Activated B cell treated with CpG ODN at 0.5 μM for 24 hours (primary cell): ENCODE measurements at regions of chr6 and their contacts with region 1.

Region 1: DNA sequence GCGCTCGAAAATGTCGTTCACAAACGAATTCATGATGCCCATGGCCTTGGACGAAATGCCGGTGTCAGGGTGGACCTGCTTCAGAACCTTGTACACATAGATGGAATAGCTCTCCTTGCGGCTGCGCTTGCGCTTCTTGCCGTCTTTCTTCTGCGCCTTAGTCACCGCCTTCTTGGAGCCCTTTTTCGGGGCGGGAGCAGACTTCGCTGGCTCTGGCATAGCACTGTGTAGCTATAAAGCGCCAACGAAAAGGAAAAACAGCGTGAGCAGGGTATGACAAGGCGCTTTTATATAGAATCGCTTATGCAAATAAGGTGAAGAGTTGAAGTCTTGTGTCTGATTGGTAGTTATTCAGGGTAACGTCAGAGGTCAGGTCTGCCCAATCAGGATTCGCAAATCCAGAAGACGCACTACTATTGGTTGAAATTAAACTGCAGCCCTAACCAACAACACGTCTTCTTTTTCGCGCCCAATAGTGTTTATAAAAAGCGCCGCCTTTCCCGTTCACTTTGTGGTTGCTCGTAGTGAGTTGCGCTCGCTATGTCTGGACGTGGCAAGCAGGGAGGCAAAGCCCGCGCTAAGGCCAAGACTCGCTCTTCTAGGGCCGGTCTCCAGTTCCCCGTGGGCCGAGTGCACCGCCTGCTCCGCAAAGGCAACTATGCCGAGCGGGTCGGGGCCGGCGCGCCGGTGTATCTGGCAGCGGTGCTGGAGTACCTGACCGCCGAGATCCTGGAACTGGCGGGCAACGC is 114.8 kb upstream of the PRSS16 start:
- DNase-seq: peak; percentile 77
- ATAC-seq: peak; percentile 84
- H3K4me3 Mint-ChIP-seq: no peak overlapping the region
- H3K27ac Mint-ChIP-seq: no peak overlapping the region
- H3K4me1 Mint-ChIP-seq: peaks cover 14% of the 10 kb centered on the region
- H3K27me3 Mint-ChIP-seq: no peaks in the 10 kb centered on the region
- CTCF ChIP-seq: no peak

Region 2: GRCh38 chr6:26031595-26032339 is 1100.9 kb before region 1 on chr6:
- CTCF ChIA-PET with region 1: no interaction called
- POLR2A ChIA-PET with region 1: interaction called, 17 read pairs
- intact Hi-C with region 1: no loop called
- DNase-seq: peak; percentile 55
- ATAC-seq: peak; percentile 62
- H3K4me3 Mint-ChIP-seq: peak overlapping the region; percentile 93
- H3K27ac Mint-ChIP-seq: peak overlapping the region; percentile 98
- H3K4me1 Mint-ChIP-seq: peaks cover 40% of the 10 kb centered on the region
- H3K27me3 Mint-ChIP-seq: peaks cover 2% of the 10 kb centered on the region
- CTCF ChIP-seq: no peak

Region 3: GRCh38 chr6:26103770-26104456 is 1028.8 kb before region 1 on chr6:
- CTCF ChIA-PET with region 1: interaction called, 3 read pairs
- POLR2A ChIA-PET with region 1: interaction called, 4 read pairs
- intact Hi-C with region 1: loop called (anchors 2 kb)
- DNase-seq: peak; percentile 83
- ATAC-seq: peak; percentile 85
- H3K4me3 Mint-ChIP-seq: peak overlapping the region; percentile 85
- H3K27ac Mint-ChIP-seq: peak overlapping the region; percentile 98
- H3K4me1 Mint-ChIP-seq: peaks cover 12% of the 10 kb centered on the region
- H3K27me3 Mint-ChIP-seq: peaks cover 3% of the 10 kb centered on the region
- CTCF ChIP-seq: no peak

Region 4: GRCh38 chr6:26234421-26235296 is 898.0 kb before region 1 on chr6:
- CTCF ChIA-PET with region 1: no interaction called
- POLR2A ChIA-PET with region 1: interaction called, 28 read pairs
- intact Hi-C with region 1: no loop called
- DNase-seq: peak; percentile 49
- ATAC-seq: peak; percentile 77
- H3K4me3 Mint-ChIP-seq: peak overlapping the region; percentile 89
- H3K27ac Mint-ChIP-seq: peak overlapping the region; percentile 97
- H3K4me1 Mint-ChIP-seq: peaks cover 26% of the 10 kb centered on the region
- H3K27me3 Mint-ChIP-seq: no peaks in the 10 kb centered on the region
- CTCF ChIP-seq: no peak

Region 5: DNA sequence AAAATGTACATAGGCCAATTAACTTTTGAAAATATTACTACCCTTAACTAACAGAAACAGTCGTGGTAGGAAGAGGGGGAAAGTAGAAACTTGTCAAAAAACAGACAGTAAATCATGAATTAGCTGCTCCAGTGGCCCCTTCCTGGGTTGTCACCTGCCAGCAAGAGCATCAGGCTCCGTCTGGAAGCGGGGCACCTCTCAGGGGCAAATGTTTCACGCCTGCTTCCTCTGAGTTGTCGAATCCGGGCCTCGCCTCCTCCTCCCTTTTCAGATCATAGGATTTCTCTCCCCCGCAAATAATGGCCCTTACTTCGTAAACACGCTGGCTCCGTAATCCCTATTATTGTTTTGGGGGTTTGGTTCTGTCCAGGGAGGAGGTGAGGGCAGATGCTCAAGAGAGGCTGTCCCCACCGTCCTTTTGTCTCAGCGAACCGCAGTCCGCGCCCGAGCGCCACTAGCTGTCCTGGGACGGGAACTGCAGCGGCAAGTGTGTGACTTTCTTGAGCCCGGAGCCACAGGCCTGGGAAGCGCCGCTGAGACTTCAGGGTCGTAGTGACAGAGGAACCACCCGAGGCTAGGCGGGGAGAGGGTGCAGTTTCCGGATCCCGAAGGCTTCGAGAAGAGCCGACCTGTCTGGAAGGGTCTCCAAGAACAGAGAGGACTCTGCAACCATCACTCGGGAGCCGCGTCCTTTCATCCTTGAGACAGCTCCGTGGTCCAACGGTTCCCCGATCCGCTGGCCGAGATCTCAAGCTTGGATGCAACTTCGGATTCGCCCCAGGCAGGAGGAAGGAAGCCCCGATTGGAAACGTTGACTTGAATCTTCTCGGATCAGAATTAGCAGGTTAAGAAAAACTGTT is 554.7 kb after region 1 on chr6:
- CTCF ChIA-PET with region 1: no interaction called
- POLR2A ChIA-PET with region 1: no interaction called
- intact Hi-C with region 1: loop called (anchors 5 kb)
- DNase-seq: peak; percentile 63
- ATAC-seq: peak; percentile 73
- H3K4me3 Mint-ChIP-seq: peak overlapping the region; percentile 93
- H3K27ac Mint-ChIP-seq: peak overlapping the region; percentile 90
- H3K4me1 Mint-ChIP-seq: peaks cover 16% of the 10 kb centered on the region
- H3K27me3 Mint-ChIP-seq: peaks cover 4% of the 10 kb centered on the region
- CTCF ChIP-seq: no peak

Region 6: GRCh38 chr6:28080631-28081485 is 948.2 kb after region 1 on chr6:
- CTCF ChIA-PET with region 1: no interaction called
- POLR2A ChIA-PET with region 1: interaction called, 4 read pairs
- intact Hi-C with region 1: loop called (anchors 2 kb)
- DNase-seq: peak; percentile 89
- ATAC-seq: peak; percentile 68
- H3K4me3 Mint-ChIP-seq: peak overlapping the region; percentile 98
- H3K27ac Mint-ChIP-seq: peak overlapping the region; percentile 97
- H3K4me1 Mint-ChIP-seq: peaks cover 52% of the 10 kb centered on the region
- H3K27me3 Mint-ChIP-seq: no peaks in the 10 kb centered on the region
- CTCF ChIP-seq: no peak